ENCODE measurements at regions of chr17 and their contacts with region 1.

Region 1: GRCh38 chr17:81401723-81402529 is 6.7 kb downstream of the BAHCC1 start:
- DNase-seq: no peak
- ATAC-seq: no peak
- H3K4me3 ChIP-seq: no peak overlapping the region
- H3K27ac ChIP-seq: peak overlapping the region; percentile 49
- H3K4me1 ChIP-seq: peaks cover 37% of the 10 kb centered on the region
- H3K27me3 ChIP-seq: no peaks in the 10 kb centered on the region
- CTCF ChIP-seq: peak; percentile 37; the same call in 1 of the 2 replicates
- POLR2A ChIP-seq: no peak
- RAD21 ChIP-seq: peak; percentile 36; the same call in 1 of the 2 replicates

Region 2: GRCh38 chr17:81422776-81423697 is 21.1 kb after region 1 on chr17:
- CTCF ChIA-PET with region 1: no interaction called
- POLR2A ChIA-PET with region 1: no interaction called
- dilution Hi-C with region 1: no loop called
- in situ Hi-C with region 1: no loop called
- intact Hi-C with region 1: loop called (anchors 2 kb)
- DNase-seq: peak; percentile 96
- ATAC-seq: peak; percentile 83
- H3K4me3 ChIP-seq: peak overlapping the region; percentile 15; the same call in 1 of the 2 replicates
- H3K27ac ChIP-seq: peak overlapping the region; percentile 98
- H3K4me1 ChIP-seq: peaks cover 44% of the 10 kb centered on the region
- H3K27me3 ChIP-seq: no peaks in the 10 kb centered on the region
- CTCF ChIP-seq: no peak
- POLR2A ChIP-seq: peak; percentile 83; the same call in 1 of the 2 replicates
- RAD21 ChIP-seq: no peak; the same call in 1 of the 2 replicates

Region 3: DNA sequence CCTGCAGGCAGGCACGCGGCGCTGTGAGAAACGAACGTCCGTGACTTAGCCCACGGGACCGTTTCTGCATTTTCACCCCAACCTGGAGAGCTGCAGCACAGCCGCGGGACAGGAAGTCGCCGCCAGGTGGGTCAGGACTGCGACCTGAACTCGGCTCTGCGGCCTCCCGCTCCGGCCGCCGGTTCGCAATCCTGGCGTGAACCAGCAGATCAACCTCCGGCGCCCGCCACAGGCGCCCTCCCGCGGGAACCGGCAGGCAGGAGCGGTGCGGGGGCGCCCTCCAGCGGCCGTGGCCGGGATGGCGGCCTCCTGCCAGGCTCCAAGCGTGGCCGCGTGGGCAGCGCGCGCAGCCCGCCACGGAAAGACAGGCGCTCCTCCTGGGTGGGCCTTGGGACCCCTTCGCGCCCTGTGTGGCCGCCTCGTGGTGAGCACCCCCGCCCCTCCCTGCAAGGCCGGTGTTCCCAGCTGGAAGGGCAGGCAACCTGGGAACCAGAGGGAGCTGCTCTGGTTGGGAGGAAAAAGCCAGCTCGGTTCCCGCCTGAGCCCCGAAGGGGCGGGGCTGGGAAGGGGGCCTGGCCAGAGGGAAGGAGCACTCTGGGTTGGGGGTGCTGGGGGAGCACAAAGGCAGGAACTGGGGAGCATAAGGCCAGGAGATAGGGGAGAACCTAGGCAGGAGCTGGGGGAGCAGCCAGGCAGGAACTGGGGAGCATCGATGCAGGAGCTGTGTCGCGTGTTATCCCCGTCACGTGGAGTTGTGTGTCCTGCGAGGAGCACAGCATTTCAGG is 82.5 kb after region 1 on chr17:
- CTCF ChIA-PET with region 1: interaction called, 3 read pairs
- POLR2A ChIA-PET with region 1: interaction called, 6 read pairs
- dilution Hi-C with region 1: no loop called
- in situ Hi-C with region 1: loop called (anchors 5 kb)
- intact Hi-C with region 1: loop called (anchors 1 kb)
- DNase-seq: peak; percentile 71
- ATAC-seq: peak; percentile 79
- H3K4me3 ChIP-seq: peak overlapping the region; percentile 45
- H3K27ac ChIP-seq: peak overlapping the region; percentile 50; the same call in 1 of the 2 replicates
- H3K4me1 ChIP-seq: peaks cover 14% of the 10 kb centered on the region
- H3K27me3 ChIP-seq: no peaks in the 10 kb centered on the region
- CTCF ChIP-seq: peak; percentile 99
- POLR2A ChIP-seq: no peak
- RAD21 ChIP-seq: peak; percentile 97

Region 4: DNA sequence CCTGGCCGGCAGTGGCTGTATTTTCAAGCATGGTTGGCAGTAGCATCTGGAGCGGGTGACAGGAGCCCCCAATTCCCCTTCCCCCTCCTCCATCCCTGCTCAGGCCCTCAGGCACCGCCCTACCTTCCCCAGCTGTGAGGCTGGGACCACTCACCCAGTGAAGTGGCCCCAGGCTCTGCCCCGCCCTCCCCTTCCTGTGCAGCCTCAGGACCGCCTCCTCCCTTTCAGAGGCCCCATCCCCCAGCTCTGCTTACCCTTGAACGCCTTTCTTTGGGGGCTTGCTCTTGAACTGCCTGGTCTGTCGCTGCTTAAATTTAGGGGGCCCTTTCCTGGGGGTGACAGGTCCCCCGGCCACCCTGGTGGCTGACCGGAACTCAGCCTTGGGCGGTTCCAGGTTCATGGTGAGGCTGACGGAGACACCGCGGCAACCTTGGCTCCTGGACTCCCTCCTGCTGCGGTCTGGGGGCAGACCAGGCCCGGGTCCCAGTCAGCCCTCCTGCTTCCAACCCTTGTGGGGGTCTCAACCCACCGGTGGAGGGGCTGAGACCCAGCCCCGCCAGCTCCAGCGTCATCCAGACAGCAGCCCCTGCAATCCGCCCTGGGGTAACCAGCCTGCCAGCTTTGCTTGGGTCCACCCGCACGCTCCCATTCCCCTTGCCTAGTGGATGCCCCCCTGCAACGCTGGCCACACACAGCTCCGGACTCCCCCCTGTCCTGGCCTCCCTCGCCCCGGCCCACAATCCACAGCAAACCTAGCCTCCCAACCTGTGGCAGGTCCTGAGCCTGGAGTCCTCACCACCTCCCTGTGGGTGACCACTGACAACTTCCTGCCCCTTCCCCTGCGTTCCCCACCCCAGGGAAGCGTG is 251.2 kb after region 1 on chr17:
- CTCF ChIA-PET with region 1: no interaction called
- POLR2A ChIA-PET with region 1: no interaction called
- dilution Hi-C with region 1: no loop called
- in situ Hi-C with region 1: no loop called
- intact Hi-C with region 1: no loop called
- DNase-seq: no peak
- ATAC-seq: no peak
- H3K4me3 ChIP-seq: no peak overlapping the region
- H3K27ac ChIP-seq: no peak overlapping the region
- H3K4me1 ChIP-seq: peaks cover 6% of the 10 kb centered on the region
- H3K27me3 ChIP-seq: peaks cover 9% of the 10 kb centered on the region
- CTCF ChIP-seq: no peak
- POLR2A ChIP-seq: no peak
- RAD21 ChIP-seq: no peak